CD4-positive, alpha-beta T cell (primary cell): ENCODE measurements at regions of chr6 and their contacts with region 1.

Region 1: DNA sequence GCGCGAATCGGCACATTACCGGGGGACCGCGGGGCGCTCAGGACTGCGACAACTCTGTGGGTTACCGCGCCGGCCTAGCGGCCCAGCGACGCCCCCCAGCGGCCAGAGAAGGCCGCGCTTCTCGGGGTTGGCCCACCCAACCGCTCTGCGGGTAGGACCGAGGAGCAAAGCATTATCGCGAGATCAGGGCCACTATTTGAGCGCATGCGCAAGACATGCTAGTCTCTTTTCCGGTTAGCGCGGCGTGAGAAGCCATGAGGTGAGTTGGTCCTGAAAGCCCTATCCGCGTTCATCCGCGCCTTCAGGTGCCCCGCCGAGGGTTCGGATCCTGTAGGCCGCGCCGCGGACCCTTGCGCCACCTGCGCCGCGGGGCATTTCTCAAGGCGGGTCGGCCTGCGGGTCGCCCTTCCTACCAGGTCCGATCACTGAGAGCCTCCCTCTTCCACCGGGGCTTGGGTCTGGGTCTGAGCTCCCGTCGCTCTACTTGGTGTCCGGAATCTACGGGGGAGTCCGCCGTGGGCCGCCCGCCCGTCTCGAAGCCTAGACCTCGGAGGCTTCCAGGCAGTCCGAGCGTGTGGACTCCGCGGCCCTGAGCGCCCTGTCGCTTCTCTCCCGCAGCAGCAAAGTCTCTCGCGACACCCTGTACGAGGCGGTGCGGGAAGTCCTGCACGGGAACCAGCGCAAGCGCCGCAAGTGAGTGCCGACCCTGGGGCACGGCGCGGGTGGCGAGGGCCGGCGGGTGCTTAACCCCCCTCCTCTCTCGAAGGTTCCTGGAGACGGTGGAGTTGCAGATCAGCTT is at the start of gene RPL10A:
- DNase-seq: peak; percentile 91 to 98 (median 96)
- ATAC-seq: peak; percentile 83
- H3K4me3 ChIP-seq: peak within 1 kb of the TSS; percentile 98
- H3K4me3 Mint-ChIP-seq: peak within 1 kb of the TSS; percentile 99
- H3K27ac ChIP-seq: peak within 1 kb of the TSS; percentile 65 to 92
- H3K27ac Mint-ChIP-seq: peak within 1 kb of the TSS; percentile 100
- H3K4me1 ChIP-seq: peaks cover 49% of the 10 kb centered on the region
- H3K4me1 Mint-ChIP-seq: peaks cover 42% of the 10 kb centered on the region
- H3K27me3 ChIP-seq: no peaks in the 10 kb centered on the region
- H3K27me3 Mint-ChIP-seq: no peaks in the 10 kb centered on the region
- CTCF ChIP-seq: peak; percentile 91
- total RNA-seq, gene RPL10A: 2,453 to 2,464 TPM

Region 2: DNA sequence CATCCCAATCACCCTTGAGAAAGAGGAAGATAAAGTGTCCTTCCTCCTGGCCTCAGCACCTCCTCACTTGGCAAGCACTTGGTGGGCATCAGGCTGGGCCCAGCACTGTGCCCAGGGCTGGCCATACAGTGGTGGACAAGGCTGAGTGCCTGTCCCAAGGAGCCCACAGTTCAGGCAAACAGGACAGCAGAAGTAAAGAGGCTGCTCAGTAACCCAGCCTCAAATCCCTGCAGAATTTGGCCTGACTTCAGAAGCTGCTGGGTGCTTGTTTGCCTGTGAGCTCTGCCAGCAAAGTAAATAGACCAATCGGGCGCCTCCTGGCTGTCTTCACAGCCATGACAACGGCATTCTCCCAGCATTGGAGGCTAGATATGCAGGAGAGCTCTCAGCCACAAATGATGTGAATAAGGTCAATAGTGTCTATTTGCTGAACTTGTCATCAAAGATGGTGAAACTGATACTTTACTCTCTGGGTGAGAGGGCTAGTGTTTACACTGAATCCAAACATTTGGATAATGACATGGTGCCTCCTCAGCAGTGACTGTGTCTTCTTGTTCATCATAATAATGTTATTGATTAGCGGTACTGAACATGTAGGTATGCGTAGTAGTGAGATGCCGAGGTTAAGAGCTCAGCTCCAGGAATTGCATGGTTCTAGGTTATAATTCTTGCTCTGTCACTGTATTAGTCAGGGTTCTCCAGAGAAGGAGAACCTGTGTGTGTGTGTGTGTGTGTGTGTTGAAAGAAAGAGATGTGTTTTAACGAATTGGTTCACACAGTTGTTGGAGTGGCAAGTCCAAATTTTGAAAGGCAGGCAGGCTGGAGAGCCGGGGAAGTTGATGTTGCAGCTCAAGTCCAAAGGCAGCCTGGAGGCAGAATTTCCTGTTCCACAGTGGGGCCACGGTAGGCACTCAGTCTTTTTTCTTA is 53.1 kb before region 1 on chr6:
- CTCF ChIA-PET with region 1: no interaction called
- POLR2A ChIA-PET with region 1: interaction called, 8 read pairs
- intact Hi-C with region 1: loop called in 1 of 2 experiments (anchors 1 kb)
- DNase-seq: peak in 9 of 14 experiments; percentile 10 to 61 (median 26)
- ATAC-seq: no peak
- H3K4me3 ChIP-seq: no peak overlapping the region
- H3K4me3 Mint-ChIP-seq: no peak overlapping the region
- H3K27ac ChIP-seq: no peak overlapping the region
- H3K27ac Mint-ChIP-seq: peak overlapping the region; percentile 61
- H3K4me1 ChIP-seq: peaks cover 50% of the 10 kb centered on the region
- H3K4me1 Mint-ChIP-seq: peaks cover 52% of the 10 kb centered on the region
- H3K27me3 ChIP-seq: no peaks in the 10 kb centered on the region
- H3K27me3 Mint-ChIP-seq: no peaks in the 10 kb centered on the region
- CTCF ChIP-seq: peak; percentile 15

Region 3: GRCh38 chr6:35496841-35497570 is 28.6 kb after region 1 on chr6 and contains the start of gene TEAD3:
- CTCF ChIA-PET with region 1: interaction called, 3 read pairs
- POLR2A ChIA-PET with region 1: interaction called, 16 read pairs
- intact Hi-C with region 1: loop called in 1 of 2 experiments (anchors 2 kb)
- DNase-seq: peak in 13 of 14 experiments; percentile 12 to 79 (median 40)
- ATAC-seq: peak; percentile 69
- H3K4me3 ChIP-seq: peak within 1 kb of the TSS; percentile 60
- H3K4me3 Mint-ChIP-seq: peak within 1 kb of the TSS; percentile 86
- H3K27ac ChIP-seq: no peak within 1 kb of the TSS
- H3K27ac Mint-ChIP-seq: peak within 1 kb of the TSS; percentile 39
- H3K4me1 ChIP-seq: peaks cover 29% of the 10 kb centered on the region
- H3K4me1 Mint-ChIP-seq: peaks cover 28% of the 10 kb centered on the region
- H3K27me3 ChIP-seq: peaks cover 3 to 14% of the 10 kb centered on the region in 2 experiments
- H3K27me3 Mint-ChIP-seq: peaks cover 25% of the 10 kb centered on the region
- CTCF ChIP-seq: no peak
- total RNA-seq, gene TEAD3: 0.11 TPM in 1 of 2 experiments, not detected in the other